ENCODE measurements at regions of chr20 and their contacts with region 1.

Region 1: DNA sequence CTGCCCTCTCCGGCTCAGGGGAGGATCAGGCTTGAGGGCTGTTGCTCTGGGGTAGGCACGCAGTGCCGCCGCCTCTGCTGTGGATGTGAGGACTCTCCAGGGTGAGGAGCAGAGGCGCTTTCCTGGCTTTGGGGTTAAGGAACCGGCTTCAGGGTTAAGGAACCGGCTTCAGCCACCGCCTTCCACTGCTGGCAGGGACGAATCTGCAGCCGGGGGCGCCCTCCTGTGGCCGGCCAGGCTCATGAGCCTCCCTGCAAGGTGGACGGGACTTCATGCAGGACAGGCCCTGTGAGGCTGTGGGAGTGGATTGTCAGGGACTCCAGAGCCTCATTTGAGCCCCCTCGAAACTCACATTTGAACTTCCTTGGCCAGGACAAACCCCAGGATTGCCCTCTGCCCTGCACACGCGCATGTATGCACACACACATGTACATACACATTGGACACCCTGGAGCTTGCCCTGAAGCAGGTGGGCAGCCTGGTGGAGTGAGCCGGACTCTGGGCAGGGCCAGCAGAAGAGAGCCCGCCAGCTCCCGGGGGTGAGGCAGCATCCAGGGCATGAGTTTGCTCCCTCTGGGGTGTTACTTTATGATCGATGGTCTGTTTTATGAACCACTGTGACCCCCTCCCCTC is 146.8 kb downstream of the PHACTR3 start:
- DNase-seq: peak; percentile 5
- ATAC-seq: peak; percentile 96
- H3K4me3 ChIP-seq: no peak overlapping the region
- H3K27ac ChIP-seq: no peak overlapping the region
- H3K4me1 ChIP-seq: no peaks in the 10 kb centered on the region
- H3K27me3 ChIP-seq: peaks cover 5% of the 10 kb centered on the region; the same call in 1 of the 2 replicates
- CTCF ChIP-seq: peak; percentile 91

Region 2: DNA sequence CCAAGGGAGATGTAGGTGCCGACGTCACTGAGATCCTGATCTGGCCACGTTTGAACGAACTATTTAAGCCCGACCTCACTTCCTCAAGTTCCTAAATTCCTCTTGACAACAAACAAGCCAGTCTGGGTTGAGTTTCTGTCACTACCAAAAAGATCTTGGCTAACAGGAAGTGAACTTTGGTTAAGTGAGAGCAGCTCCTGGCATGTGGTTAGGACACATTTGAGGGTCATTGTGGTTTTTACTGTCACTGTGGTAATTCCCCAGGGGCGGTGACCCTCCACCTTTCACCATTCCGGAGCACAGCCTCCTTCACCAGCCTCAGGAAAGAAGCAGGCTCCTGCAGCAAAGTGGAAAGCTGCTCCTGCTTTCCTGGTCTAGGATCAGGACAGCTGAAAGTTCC is 630.7 kb before region 1 on chr20:
- CTCF ChIA-PET with region 1: no interaction called
- POLR2A ChIA-PET with region 1: no interaction called
- in situ Hi-C with region 1: no loop called
- intact Hi-C with region 1: no loop called
- DNase-seq: no peak
- ATAC-seq: no peak
- H3K4me3 ChIP-seq: no peak overlapping the region
- H3K27ac ChIP-seq: no peak overlapping the region
- H3K4me1 ChIP-seq: no peaks in the 10 kb centered on the region
- H3K27me3 ChIP-seq: peaks cover 10% of the 10 kb centered on the region
- CTCF ChIP-seq: no peak

Region 3: DNA sequence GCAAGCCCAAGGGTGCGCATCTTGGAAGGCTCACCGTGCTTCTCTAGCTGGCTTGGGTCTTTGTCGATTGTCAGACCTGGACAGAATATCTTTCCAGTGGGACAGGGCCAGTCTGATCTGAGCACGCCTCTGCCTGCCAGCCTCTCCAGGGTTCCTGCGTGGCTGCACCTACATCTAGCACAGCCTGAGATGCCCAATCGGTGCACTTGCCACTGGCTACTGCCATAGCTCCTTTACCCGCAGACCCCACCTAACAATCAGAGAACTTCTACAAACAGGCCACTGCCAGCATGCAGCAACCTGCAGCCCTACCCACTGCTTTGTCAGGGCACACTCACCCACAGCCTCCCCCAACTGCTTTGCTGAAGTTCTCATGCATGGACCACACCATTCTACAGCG is 203.6 kb before region 1 on chr20:
- CTCF ChIA-PET with region 1: interaction called, 11 read pairs
- POLR2A ChIA-PET with region 1: no interaction called
- in situ Hi-C with region 1: no loop called
- intact Hi-C with region 1: no loop called
- DNase-seq: no peak
- ATAC-seq: no peak
- H3K4me3 ChIP-seq: no peak overlapping the region
- H3K27ac ChIP-seq: no peak overlapping the region
- H3K4me1 ChIP-seq: no peaks in the 10 kb centered on the region
- H3K27me3 ChIP-seq: peaks cover 11% of the 10 kb centered on the region
- CTCF ChIP-seq: no peak

Region 4: GRCh38 chr20:59571551-59572314 is 179.4 kb before region 1 on chr20:
- CTCF ChIA-PET with region 1: no interaction called
- POLR2A ChIA-PET with region 1: no interaction called
- in situ Hi-C with region 1: no loop called
- intact Hi-C with region 1: loop called (anchors 1 kb)
- DNase-seq: no peak
- ATAC-seq: peak; percentile 80
- H3K4me3 ChIP-seq: no peak overlapping the region; a peak in 1 of 4 replicates
- H3K27ac ChIP-seq: no peak overlapping the region
- H3K4me1 ChIP-seq: no peaks in the 10 kb centered on the region
- H3K27me3 ChIP-seq: peaks cover 2% of the 10 kb centered on the region; the same call in 1 of the 2 replicates
- CTCF ChIP-seq: peak; percentile 98

Region 5: DNA sequence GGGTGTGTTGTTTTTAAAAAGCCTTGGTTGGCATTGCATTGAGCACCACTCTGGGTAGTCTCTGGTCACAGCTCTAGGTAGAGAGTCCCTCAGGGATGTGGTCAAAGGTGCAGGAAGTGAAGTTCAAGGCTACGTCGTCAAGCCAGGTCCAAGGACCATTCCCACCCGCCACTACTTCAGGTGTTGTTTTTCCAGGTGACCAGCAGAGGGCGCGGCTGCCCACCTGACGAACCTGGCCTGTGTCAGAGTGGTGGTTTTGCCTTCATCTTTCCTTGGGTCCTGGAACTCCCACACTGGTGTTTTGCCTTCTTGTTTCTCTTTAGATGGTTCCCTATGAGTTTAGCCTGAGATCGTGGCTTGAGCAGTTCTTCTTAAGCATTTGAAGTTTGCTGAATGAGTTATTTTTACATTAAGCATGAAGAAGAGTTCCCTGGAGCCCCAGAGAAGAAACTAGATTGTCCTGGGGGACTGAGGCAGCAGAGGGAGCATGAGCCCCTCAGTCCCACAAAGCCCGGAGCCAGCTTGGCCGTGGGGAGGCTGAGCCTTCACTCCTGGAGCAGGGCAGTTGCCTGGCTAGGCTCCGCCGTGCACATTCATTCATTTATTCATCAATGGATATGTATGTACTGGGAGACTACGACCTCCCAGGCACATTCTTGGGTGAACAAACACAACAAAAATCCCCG is 152.4 kb before region 1 on chr20:
- CTCF ChIA-PET with region 1: interaction called, 5 read pairs
- POLR2A ChIA-PET with region 1: no interaction called
- in situ Hi-C with region 1: no loop called
- intact Hi-C with region 1: loop called (anchors 1 kb)
- DNase-seq: peak; percentile 22
- ATAC-seq: peak; percentile 92
- H3K4me3 ChIP-seq: no peak overlapping the region
- H3K27ac ChIP-seq: no peak overlapping the region
- H3K4me1 ChIP-seq: no peaks in the 10 kb centered on the region
- H3K27me3 ChIP-seq: peaks cover 23% of the 10 kb centered on the region
- CTCF ChIP-seq: peak; percentile 93

Measured in Panc1 (cell line).